Motor neuron (in vitro differentiated cells): ENCODE measurements at regions of chr4 and their contacts with region 1.

Region 1: GRCh38 chr4:87985097-87985886 is 9.8 kb downstream of the SPP1 start:
- ATAC-seq: peak; percentile 89 to 100 (median 96)
- H3K4me3 ChIP-seq: no peak overlapping the region
- H3K27ac ChIP-seq: no peak overlapping the region
- H3K4me1 ChIP-seq: no peaks in the 10 kb centered on the region

Region 2: DNA sequence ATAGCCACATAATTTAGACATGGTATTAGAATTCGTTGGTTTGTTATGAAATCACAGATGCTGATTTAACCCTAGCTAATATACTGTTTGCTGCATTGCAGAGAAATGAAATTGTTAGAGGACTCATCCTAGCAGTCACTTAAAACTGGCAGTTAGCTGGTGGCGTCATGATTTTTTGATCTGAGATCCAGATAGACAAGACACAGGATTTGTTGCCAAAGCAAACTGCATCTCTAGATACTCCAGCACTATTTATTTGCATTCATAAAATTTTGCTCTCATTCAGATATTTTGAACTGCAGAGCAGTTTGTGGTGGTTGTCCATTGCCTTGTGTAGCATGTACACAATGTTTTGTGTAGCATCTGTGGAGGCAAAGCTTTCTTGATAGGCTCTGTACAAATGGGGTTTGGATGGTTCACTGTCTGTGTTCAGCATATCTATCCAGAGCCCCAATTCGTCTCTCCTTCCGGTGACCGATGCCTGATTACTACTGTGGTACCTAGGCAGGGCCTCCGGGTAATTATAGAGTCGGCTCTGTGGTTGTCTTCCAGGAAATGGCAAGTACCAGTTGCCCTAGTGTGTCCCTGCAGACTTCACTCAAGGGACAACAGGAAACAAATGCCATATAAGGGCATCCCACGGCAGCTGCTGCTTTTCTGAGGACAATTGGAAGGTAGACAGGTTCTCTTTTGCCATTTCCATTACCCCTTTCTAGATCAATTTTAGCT is 426.0 kb before region 1 on chr4:
- in situ Hi-C with region 1: loop called in 1 of 9 experiments (anchors 25 kb)
- ATAC-seq: peak in 2 of 8 experiments; percentile 25 to 51
- H3K4me3 ChIP-seq: no peak overlapping the region
- H3K27ac ChIP-seq: no peak overlapping the region
- H3K4me1 ChIP-seq: no peaks in the 10 kb centered on the region